IMR-90 (cell line): ENCODE measurements at regions of chr11 and their contacts with region 1.

Region 1: GRCh38 chr11:66815646-66816045 is 27.6 kb upstream of the RCE1 start:
- DNase-seq: peak; percentile 43
- ATAC-seq: peak; percentile 49
- H3K4me3 ChIP-seq: no peak overlapping the region
- H3K27ac ChIP-seq: no peak overlapping the region
- H3K4me1 ChIP-seq: peaks cover 2% of the 10 kb centered on the region; the same call in 1 of the 2 replicates
- H3K27me3 ChIP-seq: no peaks in the 10 kb centered on the region
- CTCF ChIP-seq: no peak
- POLR2A ChIP-seq: no peak
- RAD21 ChIP-seq: no peak

Region 2: DNA sequence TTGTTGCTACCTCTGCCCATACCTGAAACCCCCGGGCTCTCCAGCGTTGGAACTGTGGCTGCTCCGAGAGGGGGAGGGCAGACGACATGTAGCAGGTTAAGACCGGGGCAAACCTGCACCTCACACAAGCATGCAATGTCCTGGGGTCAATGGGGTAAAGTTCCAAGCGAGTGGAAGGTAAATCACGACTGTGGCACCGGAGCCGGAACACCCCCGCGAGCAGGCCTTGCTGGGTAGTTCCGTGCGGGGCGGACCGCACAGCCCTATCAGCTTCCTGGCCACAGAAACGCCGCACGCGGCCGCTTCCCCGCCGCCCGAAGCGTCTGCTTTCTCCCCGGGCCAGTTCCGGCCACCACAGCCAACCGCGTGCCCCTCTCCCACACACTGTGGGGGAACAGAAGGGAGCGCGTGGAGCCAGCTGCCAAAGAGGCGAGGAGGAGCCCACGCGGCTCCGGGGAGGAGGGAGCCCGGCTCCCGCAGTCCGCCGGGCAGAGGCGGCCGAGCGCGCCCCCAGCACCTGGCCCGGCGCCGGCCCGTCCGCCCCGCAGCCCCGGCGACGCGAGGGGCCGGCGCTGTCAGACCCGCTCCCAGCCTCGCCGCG is 88.3 kb before region 1 on chr11:
- CTCF ChIA-PET with region 1: no interaction called
- POLR2A ChIA-PET with region 1: no interaction called
- dilution Hi-C with region 1: no loop called
- in situ Hi-C with region 1: no loop called
- intact Hi-C with region 1: loop called (anchors 5 kb)
- DNase-seq: peak; percentile 11
- ATAC-seq: peak; percentile 75
- H3K4me3 ChIP-seq: peak overlapping the region; percentile 39
- H3K27ac ChIP-seq: no peak overlapping the region
- H3K4me1 ChIP-seq: 0 out of 2 replicates have a peak, but pooled peaks cover 2% of the 10 kb centered on the region
- H3K27me3 ChIP-seq: peaks cover 69% of the 10 kb centered on the region
- CTCF ChIP-seq: no peak
- POLR2A ChIP-seq: no peak
- RAD21 ChIP-seq: no peak

Region 3: DNA sequence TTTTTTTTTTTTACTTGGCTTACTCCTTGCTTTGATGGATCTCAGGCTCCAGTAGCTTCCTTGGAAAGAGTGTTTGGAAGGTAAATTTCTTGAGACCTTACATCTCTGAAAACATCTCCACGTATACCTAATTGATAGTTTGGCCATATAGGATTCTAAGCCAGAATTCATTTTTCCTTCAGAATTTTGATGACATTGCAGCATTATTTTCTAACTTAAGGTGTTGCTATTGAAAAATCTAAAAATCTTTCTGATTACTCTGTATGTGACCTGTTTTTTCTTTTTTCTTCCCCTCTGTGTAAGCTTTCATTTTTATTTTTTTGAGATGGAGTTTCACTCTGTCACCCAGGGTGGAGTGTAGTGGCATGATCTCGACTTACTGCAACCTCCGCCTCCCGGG is 63.5 kb before region 1 on chr11:
- CTCF ChIA-PET with region 1: no interaction called
- POLR2A ChIA-PET with region 1: no interaction called
- dilution Hi-C with region 1: no loop called
- in situ Hi-C with region 1: no loop called
- intact Hi-C with region 1: loop called (anchors 10 kb)
- DNase-seq: no peak
- ATAC-seq: no peak
- H3K4me3 ChIP-seq: no peak overlapping the region
- H3K27ac ChIP-seq: no peak overlapping the region
- H3K4me1 ChIP-seq: no peaks in the 10 kb centered on the region
- H3K27me3 ChIP-seq: no peaks in the 10 kb centered on the region
- CTCF ChIP-seq: no peak
- POLR2A ChIP-seq: no peak
- RAD21 ChIP-seq: no peak

Region 4: DNA sequence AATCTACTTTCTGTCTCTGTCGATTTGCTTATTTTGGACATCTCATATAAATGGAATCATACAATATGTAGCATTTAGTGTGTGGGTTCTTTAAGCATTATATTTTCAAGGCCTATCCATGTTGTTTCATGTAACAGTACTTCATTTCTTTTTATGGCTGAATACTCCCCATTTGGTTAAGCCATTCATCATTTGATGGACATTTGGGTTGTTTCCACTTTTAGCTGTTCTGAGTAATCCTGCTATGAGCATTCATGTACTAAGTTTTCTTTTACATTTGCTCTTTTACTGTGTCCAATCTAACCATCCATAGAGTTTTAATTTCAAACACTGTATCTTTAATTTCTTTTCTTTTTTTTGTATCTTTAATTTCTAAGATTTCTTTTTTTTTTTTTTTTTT is 31.1 kb before region 1 on chr11:
- CTCF ChIA-PET with region 1: no interaction called
- POLR2A ChIA-PET with region 1: no interaction called
- dilution Hi-C with region 1: no loop called
- in situ Hi-C with region 1: no loop called
- intact Hi-C with region 1: loop called (anchors 5 kb)
- DNase-seq: peak; percentile 2
- ATAC-seq: no peak
- H3K4me3 ChIP-seq: no peak overlapping the region
- H3K27ac ChIP-seq: no peak overlapping the region
- H3K4me1 ChIP-seq: peaks cover 5% of the 10 kb centered on the region; the same call in 1 of the 2 replicates
- H3K27me3 ChIP-seq: no peaks in the 10 kb centered on the region
- CTCF ChIP-seq: no peak
- POLR2A ChIP-seq: no peak
- RAD21 ChIP-seq: no peak